AG04450 (cell line): ENCODE measurements at regions of chr2 and their contacts with region 1.

Region 1: DNA sequence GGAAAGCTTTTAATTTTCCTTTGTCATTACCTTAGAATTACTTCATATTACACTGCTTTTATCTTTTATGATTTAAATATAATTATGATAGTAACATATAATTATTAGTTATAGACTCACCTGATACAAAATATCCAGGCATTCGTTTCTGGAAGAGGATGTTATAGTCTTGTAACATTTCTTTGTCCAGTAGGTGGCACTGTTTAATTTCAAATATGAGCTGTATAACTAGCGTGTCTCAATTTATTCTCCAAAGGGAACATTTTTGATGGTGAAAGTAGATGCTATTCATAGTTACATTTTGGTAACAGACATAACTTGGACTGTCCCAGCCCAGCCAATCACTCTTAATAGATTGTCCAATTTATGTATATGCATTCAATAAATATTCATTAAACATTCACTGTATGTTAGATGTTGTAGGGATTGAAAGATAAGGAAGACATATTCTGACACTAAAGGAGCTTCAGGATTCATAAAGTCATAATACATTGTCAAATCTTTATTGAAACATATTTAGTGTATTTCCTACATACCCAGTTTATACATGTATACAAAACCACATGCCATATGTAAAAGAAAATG is 19.2 kb downstream of the DAW1 start:
- DNase-seq: peak; percentile 10
- H3K4me3 ChIP-seq: no peak overlapping the region
- H3K27ac ChIP-seq: no peak overlapping the region
- H3K27me3 ChIP-seq: no peaks in the 10 kb centered on the region
- CTCF ChIP-seq: peak; percentile 62

Region 2: DNA sequence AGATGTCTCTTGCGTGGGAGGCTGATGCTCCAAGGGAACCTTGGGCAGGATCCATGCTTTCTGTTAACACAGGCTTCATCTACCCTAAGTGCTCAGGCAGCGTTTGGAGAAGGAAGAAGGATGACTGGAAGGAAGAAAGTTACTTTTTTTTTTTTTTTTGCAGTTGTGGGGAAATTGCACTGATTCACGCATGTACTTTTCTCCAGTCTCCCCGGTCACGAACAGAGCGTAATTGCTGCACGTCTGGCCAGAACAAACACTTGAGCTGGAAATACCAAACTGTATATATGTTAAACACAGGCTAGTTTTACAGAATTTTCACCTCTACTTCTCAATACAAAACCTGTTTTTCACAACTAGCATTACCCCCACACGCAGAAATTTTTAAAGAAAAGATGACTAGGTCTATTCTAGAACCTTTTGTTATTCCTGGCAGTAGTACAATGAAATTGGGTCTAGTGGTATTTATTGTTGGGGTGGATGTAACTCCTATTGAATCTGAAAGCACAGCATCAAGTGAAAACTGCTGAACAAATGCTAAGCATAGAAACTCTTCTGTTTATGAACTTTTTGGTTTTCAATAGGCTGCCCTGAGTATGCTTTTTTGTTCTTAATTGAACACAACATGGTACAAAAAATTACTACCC is 233.3 kb before region 1 on chr2:
- CTCF ChIA-PET with region 1: interaction called, 17 read pairs
- POLR2A ChIA-PET with region 1: no interaction called
- DNase-seq: no peak
- H3K4me3 ChIP-seq: no peak overlapping the region
- H3K27ac ChIP-seq: no peak overlapping the region
- H3K27me3 ChIP-seq: no peaks in the 10 kb centered on the region
- CTCF ChIP-seq: no peak

Region 3: GRCh38 chr2:227862227-227862740 is 28.3 kb before region 1 on chr2:
- CTCF ChIA-PET with region 1: interaction called, 24 read pairs
- POLR2A ChIA-PET with region 1: no interaction called
- DNase-seq: no peak
- H3K4me3 ChIP-seq: no peak overlapping the region
- H3K27ac ChIP-seq: no peak overlapping the region
- H3K27me3 ChIP-seq: no peaks in the 10 kb centered on the region
- CTCF ChIP-seq: peak; percentile 66

Region 4: DNA sequence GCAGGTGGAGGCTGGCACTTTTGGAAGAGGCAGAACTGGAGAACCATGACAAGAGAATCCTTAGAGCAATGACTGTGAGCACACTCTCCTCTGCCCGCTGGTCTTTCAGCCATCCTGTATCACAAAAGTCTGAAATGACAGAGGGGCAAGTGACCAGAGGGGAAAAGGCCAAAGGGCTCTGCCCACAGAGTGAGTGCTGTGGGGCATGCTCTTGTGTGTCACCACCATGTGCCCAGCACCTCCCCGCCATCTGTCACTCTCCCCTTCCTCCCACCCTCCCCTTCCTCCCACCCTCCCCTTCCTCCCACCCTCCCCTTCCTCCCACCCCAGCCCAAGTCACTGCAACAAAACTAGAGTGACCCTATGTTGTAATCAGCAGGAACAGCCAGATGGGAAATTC is 12.8 kb after region 1 on chr2:
- CTCF ChIA-PET with region 1: interaction called, 20 read pairs
- POLR2A ChIA-PET with region 1: no interaction called
- DNase-seq: no peak
- H3K4me3 ChIP-seq: no peak overlapping the region
- H3K27ac ChIP-seq: no peak overlapping the region
- H3K27me3 ChIP-seq: no peaks in the 10 kb centered on the region
- CTCF ChIP-seq: no peak

Region 5: DNA sequence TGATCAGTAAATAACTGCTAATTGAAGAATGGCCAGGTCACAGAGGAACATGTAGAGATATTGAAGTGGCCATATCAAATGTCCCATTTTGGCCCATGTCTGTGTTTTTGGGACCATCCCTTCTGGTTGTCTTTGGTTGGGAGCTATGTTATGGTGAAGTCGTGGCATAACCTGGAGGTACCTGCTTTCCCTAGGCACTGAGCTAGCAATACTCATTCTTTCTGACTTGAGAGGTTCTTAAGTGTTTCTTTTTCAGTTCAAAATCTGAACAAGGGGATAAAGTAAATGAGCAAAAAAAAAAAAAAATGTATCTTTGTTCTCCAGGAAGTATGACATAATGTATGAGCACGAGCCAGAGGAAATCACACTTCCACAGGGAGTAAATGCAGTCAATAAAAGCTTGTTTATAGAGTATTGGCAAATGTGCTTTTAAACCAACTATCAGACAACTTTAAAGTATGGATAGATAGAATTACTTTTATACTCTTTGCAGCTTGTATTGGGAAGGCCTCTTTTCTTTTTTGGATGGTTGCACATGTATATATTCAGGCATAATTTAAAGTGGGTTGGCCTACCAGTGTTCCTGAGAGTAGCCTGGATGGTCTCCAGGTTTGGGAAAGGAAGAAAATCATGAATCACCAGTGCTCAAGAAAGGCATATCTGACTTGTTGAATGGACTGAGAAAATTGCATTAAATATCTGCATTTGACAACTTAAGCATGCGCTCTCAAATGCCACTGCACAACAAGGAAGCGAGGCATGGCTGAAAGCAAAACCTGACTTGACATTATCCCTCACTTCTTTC is 165.9 kb after region 1 on chr2:
- CTCF ChIA-PET with region 1: no interaction called
- POLR2A ChIA-PET with region 1: no interaction called
- DNase-seq: no peak
- H3K4me3 ChIP-seq: no peak overlapping the region
- H3K27ac ChIP-seq: no peak overlapping the region
- H3K27me3 ChIP-seq: no peaks in the 10 kb centered on the region
- CTCF ChIP-seq: no peak

Region 6: GRCh38 chr2:229273723-229274338 is 1383.2 kb after region 1 on chr2:
- CTCF ChIA-PET with region 1: interaction called, 66 read pairs
- POLR2A ChIA-PET with region 1: no interaction called
- DNase-seq: peak; percentile 23
- H3K4me3 ChIP-seq: no peak overlapping the region
- H3K27ac ChIP-seq: no peak overlapping the region
- H3K27me3 ChIP-seq: no peaks in the 10 kb centered on the region
- CTCF ChIP-seq: peak; percentile 86